BJ (cell line): ENCODE measurements at regions of chr5 and their contacts with region 1.

Region 1: DNA sequence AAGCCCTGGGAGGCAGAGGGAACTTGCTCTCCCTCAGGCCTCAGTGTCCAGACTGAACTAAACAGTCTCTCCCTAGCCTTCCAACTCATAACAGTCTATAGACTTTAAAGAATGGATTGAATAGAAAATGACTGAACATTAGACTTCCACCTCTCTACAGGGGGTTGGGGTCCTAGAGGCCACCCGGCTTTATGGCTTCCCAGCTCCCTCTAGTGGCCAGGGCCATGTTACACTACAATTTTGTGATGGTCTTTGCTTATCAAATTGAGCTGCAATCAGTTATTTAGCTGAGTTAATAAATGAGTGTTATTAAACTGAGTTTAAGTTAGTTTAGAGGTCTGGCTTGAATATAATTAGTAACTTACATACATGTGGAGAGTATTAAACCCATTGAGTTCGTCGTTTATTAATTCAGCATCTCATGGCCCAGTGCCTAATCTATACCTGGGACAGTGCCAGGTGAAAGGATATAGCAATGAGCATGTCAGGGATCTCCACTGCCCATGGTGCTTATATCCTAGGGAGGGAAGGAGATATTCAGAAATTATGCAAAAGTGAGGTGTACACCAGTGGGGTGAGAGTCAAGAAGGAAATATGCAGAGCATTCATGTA is 105.2 kb downstream of the SH3TC2 start:
- DNase-seq: no peak
- H3K4me3 ChIP-seq: no peak overlapping the region
- H3K27me3 ChIP-seq: no peaks in the 10 kb centered on the region; the same call in 1 of the 2 replicates
- CTCF ChIP-seq: peak; percentile 92

Region 2: GRCh38 chr5:148820461-148821395 is 137.0 kb before region 1 on chr5:
- CTCF ChIA-PET with region 1: interaction called, 26 read pairs
- POLR2A ChIA-PET with region 1: no interaction called
- DNase-seq: no peak
- H3K4me3 ChIP-seq: no peak overlapping the region
- H3K27me3 ChIP-seq: no peaks in the 10 kb centered on the region
- CTCF ChIP-seq: peak; percentile 73

Region 3: DNA sequence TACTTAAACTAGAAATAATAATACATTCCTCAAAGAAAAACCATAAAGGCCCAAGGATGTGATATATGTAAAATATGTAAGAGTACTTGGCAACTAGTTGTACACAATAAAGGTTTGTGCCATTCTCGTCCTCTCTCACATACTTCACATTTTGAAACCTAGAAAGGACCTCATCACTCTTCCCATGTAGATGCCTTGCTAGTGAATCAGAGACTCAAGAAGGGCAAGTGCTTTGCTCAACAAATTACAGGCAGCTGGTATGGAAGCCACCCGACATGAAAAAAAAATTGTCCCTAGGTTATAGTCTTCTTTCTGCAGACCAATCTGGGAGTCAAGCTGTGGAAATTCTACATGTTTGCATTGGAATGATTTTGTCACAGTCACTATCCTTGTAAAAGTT is 99.6 kb before region 1 on chr5:
- CTCF ChIA-PET with region 1: no interaction called
- POLR2A ChIA-PET with region 1: no interaction called
- DNase-seq: no peak
- H3K4me3 ChIP-seq: no peak overlapping the region
- H3K27me3 ChIP-seq: no peaks in the 10 kb centered on the region
- CTCF ChIP-seq: no peak

Region 4: DNA sequence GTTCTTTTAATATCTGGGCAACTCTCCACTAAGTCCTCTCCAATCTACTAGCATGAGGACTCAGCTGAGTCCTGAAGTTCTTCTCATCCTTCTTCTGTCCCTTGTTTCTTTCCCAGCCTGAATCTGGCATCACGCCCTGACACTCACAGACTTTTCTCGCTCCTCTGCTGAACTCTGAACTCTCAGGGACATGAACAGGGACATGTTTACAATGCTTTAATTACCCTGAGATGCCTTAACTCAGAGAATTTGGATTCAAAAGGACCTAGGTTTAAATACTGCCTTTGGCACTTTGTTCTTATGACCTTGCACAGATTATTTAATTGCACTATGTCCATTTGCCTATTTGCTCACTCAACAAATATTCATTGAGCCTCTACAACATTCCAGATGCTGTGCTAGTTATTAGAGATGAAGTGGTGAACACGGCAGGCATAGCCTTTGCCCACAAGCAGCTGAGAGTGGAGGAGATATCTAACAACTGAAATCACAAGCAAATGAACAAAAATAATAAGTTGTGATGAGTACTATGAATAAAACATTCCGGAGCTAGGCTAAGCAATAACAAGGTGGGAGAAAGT is 25.3 kb before region 1 on chr5:
- CTCF ChIA-PET with region 1: interaction called, 21 read pairs
- POLR2A ChIA-PET with region 1: no interaction called
- DNase-seq: no peak
- H3K4me3 ChIP-seq: no peak overlapping the region
- H3K27me3 ChIP-seq: no peaks in the 10 kb centered on the region
- CTCF ChIP-seq: no peak

Region 5: GRCh38 chr5:148970228-148970627 is 12.5 kb after region 1 on chr5:
- CTCF ChIA-PET with region 1: interaction called, 44 read pairs
- POLR2A ChIA-PET with region 1: no interaction called
- DNase-seq: no peak
- H3K4me3 ChIP-seq: no peak overlapping the region
- H3K27me3 ChIP-seq: no peaks in the 10 kb centered on the region
- CTCF ChIP-seq: no peak

Region 6: DNA sequence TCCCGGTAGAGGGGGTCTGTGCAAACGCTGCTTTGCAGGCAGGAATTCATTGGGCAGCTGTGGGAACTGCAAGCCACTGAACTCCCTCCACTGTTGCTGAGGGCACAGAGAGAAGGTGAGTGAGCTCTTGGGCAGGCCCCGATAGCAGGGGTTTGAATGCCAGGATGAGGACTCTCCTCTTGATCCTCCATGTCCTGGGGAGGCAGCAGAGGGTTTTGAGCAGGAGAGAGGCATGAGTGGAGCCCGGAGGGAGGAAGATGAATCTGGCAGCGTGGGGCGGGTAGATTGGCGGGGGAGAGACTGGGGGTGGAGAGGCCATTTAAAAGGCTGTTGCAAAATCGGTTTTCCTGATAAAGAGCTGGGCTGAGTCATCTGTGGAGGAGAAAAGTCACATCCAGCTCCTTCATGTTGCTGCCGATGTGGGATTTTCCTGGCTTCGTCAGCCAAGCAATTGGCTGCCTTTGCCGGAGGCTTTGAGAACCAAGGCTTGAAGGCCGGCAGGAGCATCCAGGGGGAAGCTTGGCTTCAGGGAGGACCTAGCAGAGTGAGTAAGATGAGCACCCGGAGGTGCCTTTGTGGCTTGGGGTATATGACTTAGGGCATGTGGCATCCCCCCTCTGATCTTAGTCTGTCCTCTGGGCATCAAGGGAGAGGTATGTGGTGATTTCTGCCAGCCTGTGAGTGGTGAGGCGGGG is 1682.8 kb after region 1 on chr5 and contains the start of gene SYNPO:
- CTCF ChIA-PET with region 1: no interaction called
- POLR2A ChIA-PET with region 1: no interaction called
- DNase-seq: peak; percentile 89
- H3K4me3 ChIP-seq: peak within 1 kb of the TSS; percentile 50
- H3K27me3 ChIP-seq: no peaks in the 10 kb centered on the region
- CTCF ChIP-seq: 0 out of 2 replicates have a peak, but pooled peaks have one; percentile 7
- polyA plus RNA-seq, gene SYNPO: 4.8 and 8.4 TPM in 2 replicates